ENCODE measurements at regions of chr7 and their contacts with region 1.

Region 1: GRCh38 chr7:142646386-142647140 is 102.7 kb upstream of the PRSS1 start:
- DNase-seq: no peak
- ATAC-seq: no peak
- H3K4me3 ChIP-seq: no peak overlapping the region
- H3K27ac ChIP-seq: no peak overlapping the region
- H3K4me1 ChIP-seq: no peaks in the 10 kb centered on the region
- H3K27me3 ChIP-seq: peaks cover 10% of the 10 kb centered on the region
- CTCF ChIP-seq: no peak
- POLR2A ChIP-seq: no peak
- RAD21 ChIP-seq: no peak

Region 2: DNA sequence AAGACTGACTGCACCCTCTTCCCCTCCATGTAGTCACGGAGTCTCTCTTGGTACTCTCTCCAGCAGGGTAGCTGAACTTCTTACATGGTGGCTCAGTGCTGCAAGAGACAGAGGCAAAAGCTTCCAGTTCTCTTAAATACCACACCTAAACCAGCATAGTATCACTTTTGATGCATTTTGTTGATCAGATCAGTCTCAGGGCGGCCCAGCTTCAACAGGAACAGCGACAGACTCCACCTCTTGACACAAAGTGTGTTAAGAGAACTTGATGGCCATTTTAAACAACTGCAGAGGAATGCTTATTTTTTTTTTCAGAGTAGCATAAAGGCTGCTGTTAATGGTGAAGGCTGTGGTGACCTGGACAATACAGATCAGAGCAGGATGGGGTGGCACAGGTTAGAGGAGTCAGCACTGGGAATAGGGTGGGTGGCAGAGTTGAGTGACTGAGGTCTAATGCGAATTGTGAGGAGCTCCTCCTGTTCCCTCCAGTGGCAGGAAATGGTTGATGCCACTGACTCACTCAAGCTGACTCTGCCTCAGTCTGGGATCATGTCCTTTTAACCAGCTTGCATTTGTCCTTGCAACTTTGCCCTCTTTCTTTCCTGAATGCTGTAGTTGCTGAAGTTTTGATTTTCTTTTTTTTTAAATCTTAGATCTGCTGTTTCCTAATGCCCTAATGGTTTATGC is 633.6 kb before region 1 on chr7:
- CTCF ChIA-PET with region 1: no interaction called
- POLR2A ChIA-PET with region 1: no interaction called
- dilution Hi-C with region 1: no loop called
- in situ Hi-C with region 1: no loop called
- intact Hi-C with region 1: no loop called
- DNase-seq: no peak
- ATAC-seq: no peak
- H3K4me3 ChIP-seq: no peak overlapping the region
- H3K27ac ChIP-seq: no peak overlapping the region
- H3K4me1 ChIP-seq: no peaks in the 10 kb centered on the region
- H3K27me3 ChIP-seq: no peaks in the 10 kb centered on the region
- CTCF ChIP-seq: no peak
- POLR2A ChIP-seq: no peak
- RAD21 ChIP-seq: no peak

Region 3: GRCh38 chr7:142535123-142535779 is 111.3 kb before region 1 on chr7:
- CTCF ChIA-PET with region 1: no interaction called
- POLR2A ChIA-PET with region 1: no interaction called
- dilution Hi-C with region 1: no loop called
- in situ Hi-C with region 1: no loop called
- intact Hi-C with region 1: no loop called
- DNase-seq: peak; percentile 92
- ATAC-seq: peak; percentile 98
- H3K4me3 ChIP-seq: no peak overlapping the region
- H3K27ac ChIP-seq: no peak overlapping the region; the same call in 1 of the 2 replicates
- H3K4me1 ChIP-seq: peaks cover 12% of the 10 kb centered on the region
- H3K27me3 ChIP-seq: no peaks in the 10 kb centered on the region
- CTCF ChIP-seq: peak; percentile 98
- POLR2A ChIP-seq: peak; percentile 42; the same call in 1 of the 2 replicates
- RAD21 ChIP-seq: peak; percentile 98

Region 4: DNA sequence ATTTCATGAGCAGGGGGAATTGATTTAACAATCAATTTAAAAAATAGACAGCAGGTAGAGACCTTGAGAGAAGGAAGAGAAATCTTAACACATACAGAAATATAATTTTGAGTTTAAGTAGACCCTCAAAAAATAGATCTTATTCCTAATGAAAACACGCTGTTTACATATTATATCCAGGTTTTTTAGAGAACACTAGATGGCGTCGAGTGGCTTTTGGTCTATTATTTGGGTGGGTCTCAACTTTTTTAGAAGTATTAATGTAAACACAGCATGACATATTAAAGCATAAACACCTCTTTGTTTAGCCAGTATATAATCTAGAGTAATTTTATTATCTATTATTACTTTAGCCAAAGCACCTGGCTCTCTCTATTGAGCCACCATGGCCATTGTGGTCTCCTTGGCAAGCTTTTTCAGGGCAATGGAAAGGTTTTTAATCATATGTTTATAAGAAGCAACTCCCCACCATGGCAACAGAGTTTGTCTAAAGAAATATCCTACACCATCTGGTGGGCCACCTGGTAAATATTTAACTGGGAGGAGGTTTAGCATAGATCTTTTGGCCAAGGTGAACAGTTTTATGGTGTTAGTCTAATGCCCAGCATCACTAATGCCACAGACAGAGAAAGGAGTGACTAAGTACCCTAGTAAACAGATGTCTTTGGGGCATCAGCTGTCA is 43.0 kb after region 1 on chr7:
- CTCF ChIA-PET with region 1: no interaction called
- POLR2A ChIA-PET with region 1: no interaction called
- dilution Hi-C with region 1: no loop called
- in situ Hi-C with region 1: no loop called
- intact Hi-C with region 1: no loop called
- DNase-seq: no peak
- ATAC-seq: no peak
- H3K4me3 ChIP-seq: no peak overlapping the region
- H3K27ac ChIP-seq: no peak overlapping the region
- H3K4me1 ChIP-seq: no peaks in the 10 kb centered on the region
- H3K27me3 ChIP-seq: no peaks in the 10 kb centered on the region; the same call in 1 of the 2 replicates
- CTCF ChIP-seq: no peak
- POLR2A ChIP-seq: no peak
- RAD21 ChIP-seq: no peak

Region 5: DNA sequence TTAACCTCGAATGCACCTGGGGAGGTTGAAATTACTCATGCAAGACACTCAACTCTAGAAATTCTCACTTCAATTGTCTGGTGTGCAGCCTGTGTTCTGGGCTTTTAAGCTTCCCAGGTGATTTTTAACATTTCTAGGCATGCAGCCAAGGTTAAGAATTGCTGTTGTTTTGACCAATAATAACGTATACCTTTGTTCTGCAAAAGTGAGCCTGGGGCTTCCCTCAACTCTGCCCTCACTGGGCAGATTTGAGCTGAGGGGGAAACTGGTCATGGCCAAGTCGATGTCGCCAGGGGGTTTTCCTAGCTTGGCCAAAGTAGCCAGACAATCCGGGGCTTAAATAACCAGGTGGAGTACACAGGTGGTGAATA is 124.8 kb after region 1 on chr7:
- CTCF ChIA-PET with region 1: no interaction called
- POLR2A ChIA-PET with region 1: no interaction called
- dilution Hi-C with region 1: no loop called
- in situ Hi-C with region 1: loop called (anchors 10 kb)
- intact Hi-C with region 1: no loop called
- DNase-seq: no peak
- ATAC-seq: no peak
- H3K4me3 ChIP-seq: no peak overlapping the region
- H3K27ac ChIP-seq: no peak overlapping the region
- H3K4me1 ChIP-seq: no peaks in the 10 kb centered on the region
- H3K27me3 ChIP-seq: peaks cover 7% of the 10 kb centered on the region; the same call in 1 of the 2 replicates
- CTCF ChIP-seq: no peak
- POLR2A ChIP-seq: no peak
- RAD21 ChIP-seq: no peak